ENCODE measurements at regions of chr2 and their contacts with region 1.

Region 1: GRCh38 chr2:70861777-70862625 is 26.4 kb upstream of the CD207 start:
- DNase-seq: peak; percentile 81
- ATAC-seq: peak; percentile 90 to 93
- H3K4me3 ChIP-seq: no peak overlapping the region
- H3K27ac ChIP-seq: no peak overlapping the region
- H3K4me1 ChIP-seq: no peaks in the 10 kb centered on the region
- H3K27me3 ChIP-seq: peaks cover 45% of the 10 kb centered on the region
- CTCF ChIP-seq: peak; percentile 98

Region 2: DNA sequence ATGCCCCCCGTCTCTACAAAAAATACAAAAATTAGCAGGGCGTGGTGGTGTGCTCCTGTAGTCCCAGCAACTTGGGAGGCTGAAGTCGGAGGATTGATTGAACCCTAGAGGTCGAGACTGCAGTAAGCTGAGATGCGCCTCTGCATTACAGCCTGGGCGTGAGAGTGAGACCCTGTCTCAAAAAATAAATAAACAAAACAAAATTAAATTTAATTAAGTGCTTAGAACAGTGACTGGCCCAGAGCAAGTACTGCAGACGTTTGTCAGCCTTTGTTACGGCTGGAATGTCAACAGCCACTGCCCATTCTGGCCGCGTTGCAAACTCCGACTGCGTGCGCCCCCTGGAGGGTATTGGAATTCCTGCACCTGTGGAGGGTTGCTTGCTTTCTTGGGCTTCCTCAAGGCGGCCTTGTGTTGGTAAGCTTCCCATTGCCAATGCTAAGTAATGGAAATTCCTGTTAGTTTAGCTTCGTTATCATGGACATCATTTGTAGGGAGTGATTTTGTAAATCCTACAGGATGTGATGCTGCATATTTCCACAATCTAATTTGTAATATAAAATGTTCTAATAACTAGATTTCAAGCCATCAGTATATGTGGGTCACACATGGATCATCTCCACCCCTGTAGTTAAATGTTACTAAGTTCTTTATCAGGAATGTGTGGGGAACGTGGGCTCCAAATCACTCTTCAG is 57.8 kb after region 1 on chr2:
- intact Hi-C with region 1: loop called (anchors 10 kb)
- DNase-seq: peak; percentile 81
- ATAC-seq: peak; percentile 91 to 93
- H3K4me3 ChIP-seq: no peak overlapping the region
- H3K27ac ChIP-seq: no peak overlapping the region
- H3K4me1 ChIP-seq: no peaks in the 10 kb centered on the region
- H3K27me3 ChIP-seq: peaks cover 6% of the 10 kb centered on the region
- CTCF ChIP-seq: peak; percentile 89

Region 3: DNA sequence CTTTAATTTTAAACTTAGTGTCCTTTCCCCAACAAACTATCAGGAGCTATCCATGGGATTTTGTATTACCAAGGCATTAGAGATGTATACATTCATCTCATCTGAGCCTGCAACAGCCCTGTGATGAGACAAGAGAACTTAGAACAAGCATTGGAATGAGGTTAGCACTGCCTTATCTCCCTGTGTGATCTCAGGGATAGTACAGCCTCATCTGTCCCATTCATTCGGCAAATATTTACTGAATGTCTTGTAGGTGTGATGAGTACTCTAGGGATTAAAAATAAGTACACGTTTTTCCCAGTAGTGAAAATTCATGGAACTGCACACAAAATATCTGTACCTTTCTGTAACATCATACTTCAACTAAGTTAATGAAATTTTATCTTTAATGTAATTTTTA is 319.3 kb after region 1 on chr2:
- intact Hi-C with region 1: no loop called
- DNase-seq: no peak
- ATAC-seq: no peak
- H3K4me3 ChIP-seq: no peak overlapping the region
- H3K27ac ChIP-seq: no peak overlapping the region
- H3K4me1 ChIP-seq: no peaks in the 10 kb centered on the region
- H3K27me3 ChIP-seq: no peaks in the 10 kb centered on the region
- CTCF ChIP-seq: no peak

Measured in lower lobe of right lung (tissue), 2 donors.